ENCODE measurements at regions of chr17 and their contacts with region 1.

Region 1: DNA sequence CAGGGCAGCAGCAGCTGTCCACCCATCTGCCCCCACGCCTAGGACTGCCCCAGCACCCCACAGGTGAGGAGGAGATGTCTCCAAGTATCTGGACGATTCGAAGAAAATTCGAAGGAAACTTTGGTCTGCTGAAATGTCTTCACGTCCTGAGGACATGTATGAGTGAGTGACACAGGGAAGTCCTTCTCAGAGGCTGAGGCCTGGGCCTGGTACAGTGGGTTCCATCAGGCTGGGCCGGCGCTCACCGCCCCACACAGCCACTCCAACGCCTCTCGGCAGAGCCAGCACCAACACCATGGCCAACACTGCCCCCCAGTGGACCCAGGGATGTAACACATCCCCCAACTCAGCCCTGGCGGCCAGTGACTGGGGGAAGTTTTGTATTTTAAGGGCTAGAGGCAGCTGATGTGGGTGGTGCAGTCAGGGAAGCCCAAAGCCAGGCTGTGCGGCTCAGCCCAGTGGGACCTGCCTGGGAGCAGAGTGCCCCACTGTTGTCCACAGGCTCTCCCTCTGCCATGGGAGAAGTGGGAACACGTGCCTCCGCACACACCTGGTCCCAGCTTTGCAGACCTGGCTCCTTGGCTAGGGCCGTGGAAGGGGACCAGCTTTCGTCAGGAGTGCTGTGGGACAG is 55.8 kb upstream of the FASN start:
- DNase-seq: peak; percentile 73 to 91
- ATAC-seq: peak; percentile 93 to 100 (median 99)
- H3K4me3 ChIP-seq: no peak overlapping the region
- H3K4me3 Mint-ChIP-seq: no peak overlapping the region
- H3K27ac ChIP-seq: no peak overlapping the region
- H3K27ac Mint-ChIP-seq: no peak overlapping the region
- H3K4me1 ChIP-seq: peaks cover 5% of the 10 kb centered on the region
- H3K4me1 Mint-ChIP-seq: no peaks in the 10 kb centered on the region
- H3K27me3 ChIP-seq: no peaks in the 10 kb centered on the region
- H3K27me3 Mint-ChIP-seq: no peaks in the 10 kb centered on the region
- CTCF ChIP-seq: peak; percentile 87

Region 2: GRCh38 chr17:81959362-81960129 is 194.3 kb before region 1 on chr17:
- intact Hi-C with region 1: loop called (anchors 1 kb)
- DNase-seq: peak; percentile 84 to 93
- ATAC-seq: peak; percentile 95 to 96 (median 96)
- H3K4me3 ChIP-seq: peak overlapping the region; percentile 7
- H3K4me3 Mint-ChIP-seq: peak overlapping the region; percentile 68
- H3K27ac ChIP-seq: no peak overlapping the region
- H3K27ac Mint-ChIP-seq: no peak overlapping the region
- H3K4me1 ChIP-seq: peaks cover 28% of the 10 kb centered on the region
- H3K4me1 Mint-ChIP-seq: no peaks in the 10 kb centered on the region
- H3K27me3 ChIP-seq: peaks cover 25% of the 10 kb centered on the region
- H3K27me3 Mint-ChIP-seq: peaks cover 19 to 28% of the 10 kb centered on the region in 2 donors
- CTCF ChIP-seq: peak; percentile 87

Region 3: DNA sequence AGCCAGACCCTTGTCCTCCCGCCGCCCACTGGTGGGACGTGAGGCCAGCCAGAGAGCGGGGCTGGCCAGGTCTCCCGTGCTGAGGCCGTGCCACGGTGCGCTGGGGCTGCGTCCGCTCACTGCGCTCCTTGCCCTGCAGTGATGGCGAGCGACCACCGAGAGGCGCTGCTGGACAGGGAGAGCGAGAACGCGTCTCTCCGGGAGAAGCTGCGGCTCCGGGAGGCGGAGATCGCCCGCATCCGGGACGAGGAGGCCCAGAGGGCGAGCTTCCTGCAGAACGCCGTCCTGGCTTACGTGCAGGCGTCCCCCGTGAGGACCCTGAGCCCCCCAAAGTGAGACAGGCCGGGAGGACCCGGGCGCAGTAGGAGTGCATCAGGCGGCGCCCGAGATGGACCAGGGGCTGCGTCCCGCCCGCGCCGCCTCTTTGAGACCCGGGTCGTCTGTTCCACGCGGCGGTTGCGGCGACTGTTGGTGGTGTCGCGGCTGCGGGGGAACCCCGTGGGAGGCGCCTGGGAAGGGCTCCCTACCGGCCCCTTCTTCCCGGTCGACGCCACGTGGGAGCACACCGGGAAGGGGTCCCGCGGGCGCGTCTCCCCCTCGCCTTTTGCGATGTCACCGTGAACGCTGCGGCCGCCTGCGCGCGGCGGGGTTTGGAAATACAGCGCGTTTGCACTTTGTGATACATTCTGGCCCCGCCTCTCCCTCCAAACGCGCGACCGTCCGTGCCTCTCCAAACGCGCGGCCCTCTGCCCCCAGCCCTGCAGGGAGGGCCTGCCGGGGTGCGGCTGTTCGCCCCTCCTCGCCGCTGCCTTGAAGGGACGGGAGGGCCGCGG is 123.2 kb before region 1 on chr17:
- intact Hi-C with region 1: loop called (anchors 1 kb)
- DNase-seq: peak; percentile 75 to 92
- ATAC-seq: peak; percentile 88 to 93 (median 92)
- H3K4me3 ChIP-seq: peak overlapping the region; percentile 30
- H3K4me3 Mint-ChIP-seq: peak overlapping the region; percentile 93
- H3K27ac ChIP-seq: no peak overlapping the region
- H3K27ac Mint-ChIP-seq: peak overlapping the region in 1 of 2 donors; percentile 58
- H3K4me1 ChIP-seq: peaks cover 24% of the 10 kb centered on the region
- H3K4me1 Mint-ChIP-seq: peaks cover 0 to 18% of the 10 kb centered on the region in 2 donors
- H3K27me3 ChIP-seq: peaks cover 6% of the 10 kb centered on the region
- H3K27me3 Mint-ChIP-seq: peaks cover 0 to 6% of the 10 kb centered on the region in 2 donors
- CTCF ChIP-seq: peak; percentile 98

Measured in natural killer cell (primary cell).